Activated CD8-positive, alpha-beta memory T cell treated with anti-CD3 and anti-CD28 coated beads, Interleukin-2, amount 10 ng/mL, durations not matched to agents 7 days and 5 days (primary cell): ENCODE measurements at regions of chr3 and their contacts with region 1.

Region 1: GRCh38 chr3:100463002-100463401 is 29.4 kb upstream of the TMEM45A start:
- DNase-seq: no peak
- ATAC-seq: peak; percentile 83
- H3K4me3 Mint-ChIP-seq: no peak overlapping the region
- H3K27ac Mint-ChIP-seq: no peak overlapping the region
- H3K4me1 Mint-ChIP-seq: peaks cover 16% of the 10 kb centered on the region
- H3K27me3 Mint-ChIP-seq: no peaks in the 10 kb centered on the region

Region 2: GRCh38 chr3:100449214-100449613 is 13.8 kb before region 1 on chr3:
- CTCF ChIA-PET with region 1: interaction called, 14 read pairs
- DNase-seq: no peak
- ATAC-seq: no peak
- H3K4me3 Mint-ChIP-seq: no peak overlapping the region
- H3K27ac Mint-ChIP-seq: no peak overlapping the region
- H3K4me1 Mint-ChIP-seq: no peaks in the 10 kb centered on the region
- H3K27me3 Mint-ChIP-seq: no peaks in the 10 kb centered on the region

Region 3: DNA sequence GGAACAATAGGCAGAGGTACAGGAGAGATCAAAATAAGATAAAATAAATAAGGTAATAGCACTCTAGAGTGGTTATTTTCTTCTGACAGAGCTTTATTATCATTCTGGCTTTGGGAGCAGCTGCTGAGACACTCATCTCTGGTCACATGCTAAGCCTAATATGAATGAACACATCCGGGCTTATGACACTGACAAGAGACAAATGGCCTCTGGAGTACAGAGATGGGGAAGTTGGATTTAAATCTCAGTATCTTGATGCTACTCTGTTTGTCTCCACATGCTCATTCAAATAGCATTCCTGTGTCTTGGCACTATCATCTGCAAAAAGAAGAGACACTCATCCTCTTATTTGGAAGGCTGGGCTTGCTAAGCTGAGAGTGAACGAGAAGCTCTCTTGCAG is 85.1 kb after region 1 on chr3:
- CTCF ChIA-PET with region 1: no interaction called
- DNase-seq: no peak
- ATAC-seq: no peak
- H3K4me3 Mint-ChIP-seq: no peak overlapping the region
- H3K27ac Mint-ChIP-seq: no peak overlapping the region
- H3K4me1 Mint-ChIP-seq: no peaks in the 10 kb centered on the region
- H3K27me3 Mint-ChIP-seq: peaks cover 14% of the 10 kb centered on the region

Region 4: DNA sequence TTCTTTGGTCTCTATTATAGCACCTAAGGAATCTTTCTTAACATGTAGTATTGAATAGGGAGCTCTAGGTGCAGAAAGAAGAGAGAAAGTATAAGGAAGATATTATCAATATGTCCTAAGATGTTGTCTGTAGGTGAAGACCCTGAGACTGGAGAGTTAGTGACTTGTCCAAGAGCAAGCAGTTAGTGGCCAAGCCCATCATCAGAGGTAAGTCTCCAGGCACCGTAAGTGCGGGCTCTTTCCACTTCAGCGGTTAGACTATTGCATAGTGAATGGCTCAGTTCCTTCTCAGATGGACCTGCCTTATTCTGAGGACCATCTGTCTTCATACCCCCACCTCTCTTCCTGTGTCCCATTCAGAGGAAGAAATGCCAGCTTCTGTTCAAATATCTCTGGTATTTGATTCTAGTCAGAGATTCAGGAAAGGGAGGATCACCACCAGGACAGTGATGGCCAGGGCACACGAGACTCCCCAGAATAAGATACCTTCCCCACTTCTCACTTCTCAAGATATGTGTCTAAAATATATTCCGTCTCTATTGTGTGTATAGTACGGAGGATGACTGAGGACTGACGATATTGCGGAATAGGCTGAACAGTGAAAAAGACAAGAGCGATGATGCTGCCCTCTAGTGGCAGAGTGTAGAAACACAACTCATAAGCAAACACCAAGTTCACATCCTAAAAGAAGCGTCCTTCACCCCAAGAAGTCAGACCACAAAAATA is 127.3 kb after region 1 on chr3:
- CTCF ChIA-PET with region 1: interaction called, 73 read pairs
- DNase-seq: peak; percentile 68
- ATAC-seq: peak; percentile 86
- H3K4me3 Mint-ChIP-seq: peak overlapping the region; percentile 19
- H3K27ac Mint-ChIP-seq: no peak overlapping the region
- H3K4me1 Mint-ChIP-seq: peaks cover 4% of the 10 kb centered on the region
- H3K27me3 Mint-ChIP-seq: peaks cover 3% of the 10 kb centered on the region

Region 5: DNA sequence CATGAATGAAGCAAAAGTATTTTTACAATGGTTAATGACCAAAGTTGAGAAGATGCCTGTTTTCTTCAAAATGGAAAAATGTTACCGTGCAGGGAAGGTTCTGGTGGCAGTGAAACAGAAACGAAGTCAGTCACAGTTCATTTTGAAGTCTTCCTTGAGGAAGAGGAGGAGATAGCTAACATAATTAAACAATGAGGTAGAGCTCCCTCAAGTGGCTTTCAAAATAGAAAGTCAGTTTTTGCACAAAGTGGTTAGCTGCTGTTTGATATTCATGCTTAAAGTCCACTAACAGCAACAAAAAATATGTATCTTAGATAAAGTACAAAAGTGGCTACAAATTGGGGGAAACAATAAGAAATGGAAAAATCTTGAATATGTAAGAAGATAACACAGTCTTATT is 333.6 kb after region 1 on chr3:
- CTCF ChIA-PET with region 1: interaction called, 12 read pairs
- DNase-seq: no peak
- ATAC-seq: peak; percentile 53
- H3K4me3 Mint-ChIP-seq: peak overlapping the region; percentile 19
- H3K27ac Mint-ChIP-seq: no peak overlapping the region
- H3K4me1 Mint-ChIP-seq: peaks cover 6% of the 10 kb centered on the region
- H3K27me3 Mint-ChIP-seq: peaks cover 3% of the 10 kb centered on the region